HCT116 (cell line): ENCODE measurements at regions of chr9 and their contacts with region 1.

Region 1: GRCh38 chr9:4339357-4339756 is 39.5 kb upstream of the GLIS3 start:
- DNase-seq: peak; percentile 81
- ATAC-seq: peak; percentile 92
- H3K4me3 ChIP-seq: peak overlapping the region in 1 of 2 experiments; percentile 12; a peak in 1 of 4 replicates
- H3K27ac ChIP-seq: 0 out of 2 replicates have a peak overlapping the region, but pooled peaks have one; percentile 25
- H3K4me1 ChIP-seq: peaks cover 0 to 14% of the 10 kb centered on the region in 2 experiments; a peak in 3 of 4 replicates
- H3K27me3 ChIP-seq: no peaks in the 10 kb centered on the region
- CTCF ChIP-seq: peak; percentile 83 to 99 (median 96)
- POLR2A ChIP-seq: no peak
- RAD21 ChIP-seq: peak; percentile 87

Region 2: GRCh38 chr9:3848445-3849114 is 490.8 kb before region 1 on chr9:
- CTCF ChIA-PET with region 1: no interaction called
- POLR2A ChIA-PET with region 1: no interaction called
- RAD21 ChIA-PET with region 1: no interaction called
- intact Hi-C with region 1: loop called (anchors 10 kb)
- DNase-seq: no peak
- ATAC-seq: peak; percentile 93
- H3K4me3 ChIP-seq: no peak overlapping the region
- H3K27ac ChIP-seq: no peak overlapping the region
- H3K4me1 ChIP-seq: peaks cover 0 to 10% of the 10 kb centered on the region in 2 experiments; a peak in 1 of 4 replicates
- H3K27me3 ChIP-seq: no peaks in the 10 kb centered on the region
- CTCF ChIP-seq: peak; percentile 35 to 45 (median 43); a peak in 4 of 6 replicates
- POLR2A ChIP-seq: no peak
- RAD21 ChIP-seq: peak; percentile 77

Region 3: GRCh38 chr9:4297151-4297785 is 42.1 kb before region 1 on chr9:
- CTCF ChIA-PET with region 1: interaction called, 10 read pairs
- POLR2A ChIA-PET with region 1: no interaction called
- RAD21 ChIA-PET with region 1: no interaction called
- intact Hi-C with region 1: no loop called
- DNase-seq: peak; percentile 79
- ATAC-seq: peak; percentile 67
- H3K4me3 ChIP-seq: peak overlapping the region; percentile 71 to 73
- H3K27ac ChIP-seq: peak overlapping the region; percentile 75
- H3K4me1 ChIP-seq: peaks cover 18 to 80% of the 10 kb centered on the region in 2 experiments
- H3K27me3 ChIP-seq: no peaks in the 10 kb centered on the region
- CTCF ChIP-seq: peak; percentile 24 to 57 (median 55); a peak in 5 of 6 replicates
- POLR2A ChIP-seq: no peak
- RAD21 ChIP-seq: peak; percentile 56

Region 4: DNA sequence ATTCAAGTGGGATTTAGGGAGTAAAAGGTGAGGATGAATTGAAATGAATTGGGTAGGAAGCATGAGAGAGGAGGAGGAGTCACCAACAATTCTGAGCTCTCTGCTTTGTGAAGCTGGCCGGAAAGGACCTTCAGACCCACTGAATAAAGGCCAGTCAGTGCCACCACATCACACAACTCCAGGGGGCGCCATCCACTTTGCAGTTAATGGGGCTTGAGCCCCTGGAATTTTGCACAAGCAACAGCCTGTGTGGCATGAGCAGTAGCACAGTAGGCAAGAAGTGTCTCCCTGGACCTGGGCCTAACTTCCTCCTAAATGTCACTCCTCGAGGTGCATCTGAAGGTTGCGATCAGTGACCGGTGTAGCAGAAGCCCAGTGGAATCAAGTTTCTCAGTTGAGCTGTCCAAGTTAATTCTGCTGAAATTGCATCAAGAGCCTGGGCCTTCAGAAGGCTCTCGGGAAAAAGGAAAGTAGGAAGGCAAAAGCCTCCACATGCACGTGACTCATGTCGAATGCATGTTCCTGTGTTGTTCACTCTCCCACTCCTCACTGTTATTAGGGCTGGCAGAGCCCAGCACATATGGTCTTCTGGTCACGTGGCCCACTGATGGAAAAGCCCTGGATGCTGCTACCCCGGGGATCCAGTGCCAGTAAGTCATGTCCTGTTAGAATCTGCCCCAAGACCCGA is 11.7 kb before region 1 on chr9:
- CTCF ChIA-PET with region 1: interaction called, 16 read pairs
- POLR2A ChIA-PET with region 1: no interaction called
- RAD21 ChIA-PET with region 1: no interaction called
- intact Hi-C with region 1: no loop called
- DNase-seq: no peak
- ATAC-seq: peak; percentile 60
- H3K4me3 ChIP-seq: no peak overlapping the region
- H3K27ac ChIP-seq: no peak overlapping the region
- H3K4me1 ChIP-seq: peaks cover 0 to 4% of the 10 kb centered on the region in 2 experiments; a peak in 1 of 4 replicates
- H3K27me3 ChIP-seq: no peaks in the 10 kb centered on the region
- CTCF ChIP-seq: peak in 2 of 3 experiments; percentile 29 to 44; a peak in 3 of 6 replicates
- POLR2A ChIP-seq: no peak
- RAD21 ChIP-seq: peak; percentile 24

Region 5: GRCh38 chr9:4413856-4414455 is 74.6 kb after region 1 on chr9:
- CTCF ChIA-PET with region 1: no interaction called
- POLR2A ChIA-PET with region 1: no interaction called
- RAD21 ChIA-PET with region 1: no interaction called
- intact Hi-C with region 1: no loop called
- DNase-seq: no peak
- ATAC-seq: no peak
- H3K4me3 ChIP-seq: no peak overlapping the region
- H3K27ac ChIP-seq: no peak overlapping the region
- H3K4me1 ChIP-seq: no peaks in the 10 kb centered on the region
- H3K27me3 ChIP-seq: no peaks in the 10 kb centered on the region
- CTCF ChIP-seq: no peak
- POLR2A ChIP-seq: no peak
- RAD21 ChIP-seq: no peak